ENCODE measurements at regions of chrX and their contacts with region 1.

Region 1: GRCh38 chrX:102950908-102951866 is 14.1 kb downstream of the RAB40AL start:
- DNase-seq: peak; percentile 63
- H3K4me3 Mint-ChIP-seq: no peak overlapping the region
- H3K27ac Mint-ChIP-seq: no peak overlapping the region
- H3K4me1 Mint-ChIP-seq: peaks cover 4% of the 10 kb centered on the region
- H3K27me3 Mint-ChIP-seq: peaks cover 4% of the 10 kb centered on the region

Region 2: DNA sequence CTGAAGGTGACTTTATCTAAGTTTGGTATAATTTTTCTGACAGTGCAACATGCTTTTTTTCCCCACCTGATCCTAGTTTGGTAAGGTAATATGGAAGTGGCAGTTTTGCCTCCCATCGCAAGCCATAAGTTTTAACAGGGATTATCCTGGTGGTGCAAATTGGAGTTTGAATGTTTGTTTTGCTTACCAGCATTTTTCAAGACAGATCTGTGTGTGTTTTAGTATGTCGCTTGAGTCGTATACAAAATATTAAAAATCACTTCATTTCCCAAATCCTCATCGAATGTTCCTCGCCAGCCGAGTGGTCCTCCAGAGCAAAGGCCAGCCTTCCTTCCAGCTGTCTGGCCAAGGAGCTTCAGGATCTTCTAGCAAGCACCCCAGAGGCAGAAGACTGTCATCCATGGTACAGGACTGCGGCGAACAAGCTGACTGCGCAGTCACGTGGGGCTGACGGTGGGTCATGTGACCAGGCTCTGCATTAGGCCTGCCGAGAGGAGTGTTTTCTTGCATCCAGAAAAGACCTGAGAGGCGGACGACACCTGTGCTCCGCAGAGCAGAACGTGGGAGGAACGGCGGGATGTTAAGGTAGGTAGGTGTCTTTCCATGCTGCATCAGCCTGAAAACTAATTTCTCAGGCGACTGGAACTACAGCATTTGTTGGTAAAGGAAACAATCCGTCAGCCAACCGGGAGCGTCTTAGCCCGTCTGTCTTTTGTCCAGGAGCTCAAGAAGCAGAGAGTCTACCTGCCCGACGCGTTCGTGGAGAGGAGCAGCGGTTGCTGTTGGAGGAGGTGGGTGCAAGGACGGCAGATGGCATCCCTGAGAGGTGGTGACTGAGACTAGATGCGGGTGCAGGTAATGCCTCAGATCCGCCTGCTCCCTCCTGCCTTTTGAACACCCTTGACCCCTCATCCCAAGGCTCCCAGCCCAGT is 230.7 kb before region 1 on chrX and contains the start of gene GPRASP3:
- CTCF ChIA-PET with region 1: no interaction called
- DNase-seq: peak; percentile 83
- H3K4me3 Mint-ChIP-seq: peak within 1 kb of the TSS; percentile 78
- H3K27ac Mint-ChIP-seq: peak within 1 kb of the TSS; percentile 69
- H3K4me1 Mint-ChIP-seq: peaks cover 12% of the 10 kb centered on the region
- H3K27me3 Mint-ChIP-seq: no peaks in the 10 kb centered on the region

Region 3: DNA sequence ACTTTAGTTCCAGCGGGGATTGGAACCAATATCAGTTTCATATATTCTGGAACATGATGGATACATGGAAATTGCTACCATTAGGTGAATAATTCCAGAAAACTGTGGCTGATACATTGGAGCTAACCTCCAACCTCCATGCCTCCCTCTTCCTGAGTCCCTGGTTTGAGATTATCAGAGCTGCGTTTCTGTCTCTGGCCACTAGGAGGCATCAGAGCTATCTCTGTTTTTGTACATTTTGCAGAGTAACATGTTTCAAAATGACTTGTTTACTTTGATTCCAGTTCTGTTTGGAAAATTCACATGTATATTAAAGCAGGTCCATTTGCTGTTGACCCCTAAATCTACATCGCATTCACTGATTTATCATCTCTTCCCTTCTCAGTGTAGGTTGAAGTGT is 16.6 kb before region 1 on chrX:
- CTCF ChIA-PET with region 1: interaction called, 10 read pairs
- DNase-seq: peak; percentile 48
- H3K4me3 Mint-ChIP-seq: no peak overlapping the region
- H3K27ac Mint-ChIP-seq: no peak overlapping the region
- H3K4me1 Mint-ChIP-seq: no peaks in the 10 kb centered on the region
- H3K27me3 Mint-ChIP-seq: no peaks in the 10 kb centered on the region

Region 4: DNA sequence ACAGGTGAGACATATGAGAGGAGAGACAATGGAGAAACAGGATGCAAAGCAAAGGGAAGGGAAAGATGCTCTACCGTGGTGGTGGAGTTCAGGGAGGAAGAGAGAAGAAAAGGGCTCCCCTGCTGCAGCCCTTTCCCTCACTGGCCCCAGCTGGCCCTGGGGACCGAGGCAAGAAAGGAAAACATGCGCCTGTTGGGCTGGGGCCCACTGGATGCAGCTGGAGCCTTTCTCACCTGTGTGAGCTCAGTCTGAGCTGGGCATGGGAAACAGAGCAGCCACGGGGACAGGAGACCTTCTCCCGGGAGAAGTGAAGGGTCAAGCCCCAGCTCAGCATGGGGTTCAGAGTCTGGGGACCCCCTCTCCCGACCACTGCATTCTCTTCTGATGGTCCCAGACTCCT is 129.9 kb after region 1 on chrX:
- CTCF ChIA-PET with region 1: no interaction called
- DNase-seq: no peak
- H3K4me3 Mint-ChIP-seq: no peak overlapping the region
- H3K27ac Mint-ChIP-seq: no peak overlapping the region
- H3K4me1 Mint-ChIP-seq: no peaks in the 10 kb centered on the region
- H3K27me3 Mint-ChIP-seq: no peaks in the 10 kb centered on the region

Region 5: GRCh38 chrX:103175944-103176753 is 225.0 kb after region 1 on chrX:
- CTCF ChIA-PET with region 1: interaction called, 18 read pairs
- DNase-seq: peak; percentile 66
- H3K4me3 Mint-ChIP-seq: no peak overlapping the region
- H3K27ac Mint-ChIP-seq: no peak overlapping the region
- H3K4me1 Mint-ChIP-seq: peaks cover 3% of the 10 kb centered on the region
- H3K27me3 Mint-ChIP-seq: no peaks in the 10 kb centered on the region

Measured in activated naive CD4-positive, alpha-beta T cell treated with anti-CD3 and anti-CD28 coated beads, Interleukin-2, amount 10 ng/mL, durations not matched to agents 7 days and 5 days (primary cell).